ENCODE measurements at regions of chr11 and their contacts with region 1.

Region 1: DNA sequence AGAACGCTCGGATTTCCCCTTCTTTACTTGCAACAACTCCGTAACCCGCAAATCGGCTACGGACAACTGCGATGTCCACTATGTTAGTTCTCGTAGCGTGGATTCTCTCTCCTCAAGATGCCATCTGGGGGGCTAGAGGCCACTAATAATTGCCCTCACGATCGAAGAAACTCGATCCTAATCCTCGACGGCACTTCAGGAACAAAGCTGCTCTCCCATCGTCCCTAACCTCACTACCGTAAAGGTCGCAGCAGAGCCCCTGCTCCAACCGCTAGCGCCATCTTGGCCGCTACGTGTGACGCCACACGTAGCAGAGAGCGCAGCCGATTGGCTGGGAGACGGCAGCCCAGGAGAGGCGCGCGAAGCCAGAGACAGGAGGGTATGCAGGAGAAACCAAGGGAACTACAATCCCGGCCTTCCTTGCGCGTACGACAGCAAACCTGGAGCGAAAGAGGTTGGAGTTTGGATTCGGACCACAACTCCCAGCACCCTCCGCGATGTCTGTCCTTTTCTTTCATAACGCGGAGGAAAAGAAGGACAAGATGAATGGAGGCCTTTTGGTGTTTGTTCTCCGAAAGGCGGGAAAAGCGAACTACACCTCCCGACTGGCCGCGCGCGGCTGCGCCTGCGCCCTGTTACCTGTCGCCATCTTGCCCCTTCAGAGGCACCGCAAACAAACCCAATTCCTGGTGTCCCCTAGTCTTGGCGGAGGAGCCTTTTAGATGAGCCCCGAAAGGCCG is at the start of gene EMSY:
- DNase-seq: peak; percentile 99 to 100
- H3K4me3 ChIP-seq: peak within 1 kb of the TSS; percentile 92
- H3K4me3 Mint-ChIP-seq: peak within 1 kb of the TSS; percentile 98
- H3K27ac Mint-ChIP-seq: peak within 1 kb of the TSS; percentile 99
- H3K4me1 ChIP-seq: peaks cover 15% of the 10 kb centered on the region
- H3K4me1 Mint-ChIP-seq: peaks cover 27% of the 10 kb centered on the region
- H3K27me3 ChIP-seq: no peaks in the 10 kb centered on the region
- H3K27me3 Mint-ChIP-seq: no peaks in the 10 kb centered on the region
- CTCF ChIP-seq: no peak
- total RNA-seq, gene EMSY: 43.6 and 53.6 TPM in 2 replicates

Region 2: GRCh38 chr11:76318744-76319384 is 125.7 kb before region 1 on chr11:
- CTCF ChIA-PET with region 1: interaction called, 10 read pairs
- POLR2A ChIA-PET with region 1: no interaction called
- intact Hi-C with region 1: no loop called
- DNase-seq: peak; percentile 90 to 94
- H3K4me3 ChIP-seq: no peak overlapping the region
- H3K4me3 Mint-ChIP-seq: no peak overlapping the region
- H3K27ac Mint-ChIP-seq: no peak overlapping the region
- H3K4me1 ChIP-seq: peaks cover 12% of the 10 kb centered on the region
- H3K4me1 Mint-ChIP-seq: no peaks in the 10 kb centered on the region
- H3K27me3 ChIP-seq: no peaks in the 10 kb centered on the region
- H3K27me3 Mint-ChIP-seq: no peaks in the 10 kb centered on the region
- CTCF ChIP-seq: peak; percentile 99

Region 3: GRCh38 chr11:76380967-76381719 is 63.4 kb before region 1 on chr11 and contains the starts of genes GVQW3 and THAP12:
- CTCF ChIA-PET with region 1: interaction called, 6 read pairs
- POLR2A ChIA-PET with region 1: no interaction called
- intact Hi-C with region 1: loop called (anchors 1 kb)
- DNase-seq: peak; percentile 100
- H3K4me3 ChIP-seq: peak within 1 kb of the TSS; percentile 75
- H3K4me3 Mint-ChIP-seq: peak within 1 kb of the TSS; percentile 92
- H3K27ac Mint-ChIP-seq: peak within 1 kb of the TSS; percentile 68
- H3K4me1 ChIP-seq: peaks cover 28% of the 10 kb centered on the region
- H3K4me1 Mint-ChIP-seq: peaks cover 41% of the 10 kb centered on the region
- H3K27me3 ChIP-seq: no peaks in the 10 kb centered on the region
- H3K27me3 Mint-ChIP-seq: no peaks in the 10 kb centered on the region
- CTCF ChIP-seq: peak in 1 of 2 experiments; percentile 27
- total RNA-seq, gene GVQW3: 13.0 and 15.8 TPM in 2 replicates
- total RNA-seq, gene THAP12: 99.9 and 102 TPM in 2 replicates

Region 4: GRCh38 chr11:76506833-76507232 is 62.3 kb after region 1 on chr11:
- CTCF ChIA-PET with region 1: interaction called, 3 read pairs
- POLR2A ChIA-PET with region 1: no interaction called
- intact Hi-C with region 1: loop called (anchors 2 kb)
- DNase-seq: no peak
- H3K4me3 ChIP-seq: no peak overlapping the region
- H3K4me3 Mint-ChIP-seq: no peak overlapping the region
- H3K27ac Mint-ChIP-seq: no peak overlapping the region
- H3K4me1 ChIP-seq: no peaks in the 10 kb centered on the region
- H3K4me1 Mint-ChIP-seq: no peaks in the 10 kb centered on the region
- H3K27me3 ChIP-seq: no peaks in the 10 kb centered on the region
- H3K27me3 Mint-ChIP-seq: no peaks in the 10 kb centered on the region
- CTCF ChIP-seq: no peak

Region 5: DNA sequence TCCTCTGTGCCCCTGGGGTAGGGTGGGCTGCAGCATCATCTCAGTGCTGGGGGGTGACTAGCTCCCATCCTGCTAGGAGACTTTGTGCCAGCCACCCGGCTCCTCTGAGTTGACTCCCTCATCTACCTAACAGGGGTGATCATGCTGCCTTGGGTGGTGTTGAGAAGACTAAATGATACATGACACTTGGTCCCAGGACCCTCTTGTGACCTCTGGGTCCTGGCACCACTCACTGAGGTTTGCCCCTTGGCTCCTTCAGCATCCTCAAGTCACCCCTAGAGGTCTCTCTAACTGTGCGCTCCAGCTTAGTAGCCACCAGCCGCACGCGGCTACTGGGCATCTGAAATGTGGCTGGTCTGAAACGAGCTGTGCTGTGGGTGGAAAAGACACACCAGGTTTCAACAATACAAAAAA is 153.9 kb after region 1 on chr11:
- CTCF ChIA-PET with region 1: no interaction called
- POLR2A ChIA-PET with region 1: no interaction called
- intact Hi-C with region 1: no loop called
- DNase-seq: peak; percentile 56 to 64
- H3K4me3 ChIP-seq: no peak overlapping the region
- H3K4me3 Mint-ChIP-seq: no peak overlapping the region
- H3K27ac Mint-ChIP-seq: no peak overlapping the region
- H3K4me1 ChIP-seq: no peaks in the 10 kb centered on the region
- H3K4me1 Mint-ChIP-seq: no peaks in the 10 kb centered on the region
- H3K27me3 ChIP-seq: no peaks in the 10 kb centered on the region
- H3K27me3 Mint-ChIP-seq: no peaks in the 10 kb centered on the region
- CTCF ChIP-seq: peak; percentile 58 to 76

Region 6: GRCh38 chr11:76670485-76671236 is 226.1 kb after region 1 on chr11 and contains the start of gene LRRC32:
- CTCF ChIA-PET with region 1: no interaction called
- POLR2A ChIA-PET with region 1: no interaction called
- intact Hi-C with region 1: loop called (anchors 10 kb)
- DNase-seq: peak in 1 of 2 experiments; percentile 38
- H3K4me3 ChIP-seq: peak within 1 kb of the TSS; percentile 28
- H3K4me3 Mint-ChIP-seq: peak within 1 kb of the TSS; percentile 60
- H3K27ac Mint-ChIP-seq: no peak within 1 kb of the TSS
- H3K4me1 ChIP-seq: peaks cover 9% of the 10 kb centered on the region
- H3K4me1 Mint-ChIP-seq: no peaks in the 10 kb centered on the region
- H3K27me3 ChIP-seq: no peaks in the 10 kb centered on the region
- H3K27me3 Mint-ChIP-seq: peaks cover 3% of the 10 kb centered on the region
- CTCF ChIP-seq: no peak
- total RNA-seq, gene LRRC32: 0.27 and 0.84 TPM in 2 replicates